HepG2 (cell line): ENCODE measurements at regions of chr13 and their contacts with region 1.

Region 1: DNA sequence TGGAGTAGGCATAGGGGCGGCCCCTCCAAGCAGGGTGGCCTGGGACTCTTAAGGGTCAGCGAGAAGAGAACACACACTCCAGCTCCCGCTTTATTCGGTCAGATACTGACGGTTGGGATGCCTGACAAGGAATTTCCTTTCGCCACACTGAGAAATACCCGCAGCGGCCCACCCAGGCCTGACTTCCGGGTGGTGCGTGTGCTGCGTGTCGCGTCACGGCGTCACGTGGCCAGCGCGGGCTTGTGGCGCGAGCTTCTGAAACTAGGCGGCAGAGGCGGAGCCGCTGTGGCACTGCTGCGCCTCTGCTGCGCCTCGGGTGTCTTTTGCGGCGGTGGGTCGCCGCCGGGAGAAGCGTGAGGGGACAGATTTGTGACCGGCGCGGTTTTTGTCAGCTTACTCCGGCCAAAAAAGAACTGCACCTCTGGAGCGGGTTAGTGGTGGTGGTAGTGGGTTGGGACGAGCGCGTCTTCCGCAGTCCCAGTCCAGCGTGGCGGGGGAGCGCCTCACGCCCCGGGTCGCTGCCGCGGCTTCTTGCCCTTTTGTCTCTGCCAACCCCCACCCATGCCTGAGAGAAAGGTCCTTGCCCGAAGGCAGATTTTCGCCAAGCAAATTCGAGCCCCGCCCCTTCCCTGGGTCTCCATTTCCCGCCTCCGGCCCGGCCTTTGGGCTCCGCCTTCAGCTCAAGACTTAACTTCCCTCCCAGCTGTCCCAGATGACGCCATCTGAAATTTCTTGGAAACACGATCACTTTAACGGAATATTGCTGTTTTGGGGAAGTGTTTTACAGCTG is at the starts of genes BRCA2 and ZAR1L:
- DNase-seq: peak; percentile 79
- ATAC-seq: peak; percentile 99
- H3K4me3 ChIP-seq: peak within 1 kb of the TSS; percentile 66 to 83 (median 72)
- H3K27ac ChIP-seq: peak within 1 kb of the TSS; percentile 75
- H3K4me1 ChIP-seq: peaks cover 32% of the 10 kb centered on the region
- H3K27me3 ChIP-seq: no peaks in the 10 kb centered on the region; a peak in 1 of 5 replicates
- CTCF ChIP-seq: no peak; the same call in 1 of the 2 replicates
- EP300 ChIP-seq: no peak
- POLR2A ChIP-seq: peak; percentile 83 to 90
- RAD21 ChIP-seq: 0 out of 2 replicates have a peak, but pooled peaks have one; percentile 4
- total RNA-seq, gene BRCA2: 24.6 and 28.3 TPM in 2 replicates
- total RNA-seq, gene ZAR1L: 0.09 TPM in 1 of 2 replicates, not detected in the other

Region 2: GRCh38 chr13:31545616-31546015 is 769.8 kb before region 1 on chr13:
- CTCF ChIA-PET with region 1: no interaction called
- POLR2A ChIA-PET with region 1: no interaction called
- in situ Hi-C with region 1: no loop called
- intact Hi-C with region 1: no loop called
- DNase-seq: no peak
- ATAC-seq: no peak
- H3K4me3 ChIP-seq: no peak overlapping the region
- H3K27ac ChIP-seq: no peak overlapping the region
- H3K4me1 ChIP-seq: no peaks in the 10 kb centered on the region
- H3K27me3 ChIP-seq: no peaks in the 10 kb centered on the region
- CTCF ChIP-seq: no peak
- EP300 ChIP-seq: no peak
- POLR2A ChIP-seq: no peak
- RAD21 ChIP-seq: no peak

Region 3: DNA sequence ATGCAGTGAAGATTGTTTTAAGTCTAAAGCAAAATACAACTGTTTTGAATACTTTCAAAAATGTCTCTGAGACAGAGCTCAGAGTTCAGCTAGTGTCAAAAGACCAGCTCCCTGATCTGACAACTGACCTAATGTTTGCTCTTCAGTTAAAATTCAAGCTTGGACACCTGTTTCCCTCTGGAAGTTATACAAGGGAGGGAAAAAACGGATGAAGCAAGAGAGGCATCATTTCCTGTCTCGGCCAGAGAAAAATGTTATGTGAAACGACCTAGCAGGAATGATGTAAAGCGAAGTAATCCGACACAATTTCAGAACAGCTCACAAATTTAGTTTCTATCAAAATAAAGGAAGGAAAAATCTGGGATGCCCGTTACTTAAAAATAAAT is 59.7 kb before region 1 on chr13:
- CTCF ChIA-PET with region 1: no interaction called
- POLR2A ChIA-PET with region 1: interaction called, 36 read pairs
- in situ Hi-C with region 1: no loop called
- intact Hi-C with region 1: no loop called
- DNase-seq: peak; percentile 97
- ATAC-seq: peak; percentile 96
- H3K4me3 ChIP-seq: peak overlapping the region; percentile 5 to 59 (median 24); a peak in 3 of 6 replicates
- H3K27ac ChIP-seq: peak overlapping the region; percentile 92
- H3K4me1 ChIP-seq: peaks cover 80% of the 10 kb centered on the region
- H3K27me3 ChIP-seq: no peaks in the 10 kb centered on the region
- CTCF ChIP-seq: no peak
- EP300 ChIP-seq: peak; percentile 74 to 94; a peak in 3 of 4 replicates
- POLR2A ChIP-seq: peak in 1 of 2 experiments; percentile 30; a peak in 1 of 4 replicates
- RAD21 ChIP-seq: no peak

Region 4: GRCh38 chr13:32261567-32261966 is 53.9 kb before region 1 on chr13:
- CTCF ChIA-PET with region 1: interaction called, 5 read pairs
- POLR2A ChIA-PET with region 1: interaction called, 11 read pairs
- in situ Hi-C with region 1: no loop called
- intact Hi-C with region 1: no loop called
- DNase-seq: no peak
- ATAC-seq: peak; percentile 19; the same call in 2 of the 3 replicates
- H3K4me3 ChIP-seq: no peak overlapping the region
- H3K27ac ChIP-seq: peak overlapping the region; percentile 62
- H3K4me1 ChIP-seq: peaks cover 93% of the 10 kb centered on the region
- H3K27me3 ChIP-seq: no peaks in the 10 kb centered on the region
- CTCF ChIP-seq: no peak
- EP300 ChIP-seq: no peak
- POLR2A ChIP-seq: no peak
- RAD21 ChIP-seq: no peak

Region 5: GRCh38 chr13:33080972-33081590 is 765.6 kb after region 1 on chr13:
- CTCF ChIA-PET with region 1: no interaction called
- POLR2A ChIA-PET with region 1: no interaction called
- in situ Hi-C with region 1: no loop called
- intact Hi-C with region 1: no loop called
- DNase-seq: no peak
- ATAC-seq: no peak
- H3K4me3 ChIP-seq: no peak overlapping the region
- H3K27ac ChIP-seq: no peak overlapping the region
- H3K4me1 ChIP-seq: peaks cover 4% of the 10 kb centered on the region; the same call in 1 of the 2 replicates
- H3K27me3 ChIP-seq: no peaks in the 10 kb centered on the region
- CTCF ChIP-seq: no peak
- EP300 ChIP-seq: no peak
- POLR2A ChIP-seq: no peak
- RAD21 ChIP-seq: no peak